ENCODE measurements at regions of chr1 and their contacts with region 1.

Region 1: DNA sequence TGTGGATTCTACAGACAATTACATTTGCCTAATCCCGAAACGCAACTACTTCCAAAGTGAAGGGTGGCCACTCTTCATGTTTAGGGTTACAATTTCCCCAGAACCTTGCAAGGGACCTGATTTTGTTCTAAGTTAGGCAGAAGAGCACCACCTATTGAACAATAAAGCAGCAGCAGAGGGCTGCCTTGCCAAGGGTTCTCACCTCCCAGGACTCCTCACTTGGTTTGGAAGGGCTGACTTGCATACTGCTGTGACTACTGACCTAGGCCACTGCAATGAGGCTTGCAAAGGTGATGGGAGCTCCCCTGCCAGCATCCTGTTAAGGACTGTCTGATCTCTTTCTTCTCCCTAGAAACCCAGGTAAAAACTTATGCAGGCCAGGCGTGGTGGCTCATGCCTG is 14.2 kb downstream of the MTOR start:
- DNase-seq: no peak
- ATAC-seq: no peak
- H3K4me3 ChIP-seq: no peak overlapping the region
- H3K27ac ChIP-seq: no peak overlapping the region
- H3K4me1 ChIP-seq: no peaks in the 10 kb centered on the region
- H3K27me3 ChIP-seq: no peaks in the 10 kb centered on the region
- CTCF ChIP-seq: no peak

Region 2: GRCh38 chr1:11384170-11384554 is 136.0 kb after region 1 on chr1:
- intact Hi-C with region 1: no loop called
- DNase-seq: no peak
- ATAC-seq: no peak
- H3K4me3 ChIP-seq: no peak overlapping the region
- H3K27ac ChIP-seq: no peak overlapping the region
- H3K4me1 ChIP-seq: no peaks in the 10 kb centered on the region
- H3K27me3 ChIP-seq: peaks cover 0 to 69% of the 10 kb centered on the region in 2 donors
- CTCF ChIP-seq: no peak

Region 3: DNA sequence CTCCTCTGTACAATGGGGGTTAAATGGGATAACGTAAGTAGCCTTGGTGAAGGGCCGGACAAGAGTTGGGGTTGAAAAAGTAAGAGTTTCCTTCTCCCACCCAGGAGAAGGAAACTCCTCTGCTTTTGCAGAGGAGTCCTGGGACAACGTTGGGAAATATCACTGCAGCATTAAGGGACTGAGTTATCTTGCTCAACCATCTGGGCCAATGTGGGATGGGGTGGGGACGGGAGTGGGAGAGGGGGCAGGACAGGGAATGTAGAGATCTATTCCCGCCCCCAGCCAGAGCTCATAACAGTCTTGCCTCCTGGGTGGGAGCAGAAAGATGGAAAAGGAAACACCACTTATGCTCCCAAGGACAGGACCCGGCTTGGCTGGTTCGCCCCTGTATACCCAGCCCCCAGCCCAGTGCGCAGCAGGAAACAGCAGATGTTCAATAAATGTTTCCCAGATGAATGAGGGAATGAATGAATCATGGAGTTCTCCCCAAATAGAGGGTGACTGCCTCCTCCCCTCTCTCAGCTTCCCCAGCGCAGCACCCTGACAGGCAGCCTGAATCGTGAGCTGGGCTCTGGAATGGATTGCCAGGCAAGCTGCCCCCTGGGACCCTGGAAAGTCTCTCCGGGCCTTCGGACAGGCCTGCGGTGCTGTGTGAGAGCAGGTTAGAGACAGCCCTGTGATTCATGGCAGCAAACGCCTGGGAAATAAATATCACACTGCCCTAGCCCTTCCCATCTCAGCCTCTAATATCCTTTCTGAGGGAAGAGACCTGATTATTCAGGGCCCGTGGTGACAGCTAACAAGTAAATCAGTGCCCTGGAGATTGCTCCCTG is 381.2 kb after region 1 on chr1:
- intact Hi-C with region 1: loop called in 1 of 2 experiments (anchors 10 kb)
- DNase-seq: no peak
- ATAC-seq: no peak
- H3K4me3 ChIP-seq: no peak overlapping the region
- H3K27ac ChIP-seq: no peak overlapping the region
- H3K4me1 ChIP-seq: no peaks in the 10 kb centered on the region
- H3K27me3 ChIP-seq: peaks cover 0 to 57% of the 10 kb centered on the region in 2 donors
- CTCF ChIP-seq: no peak

Measured in left lung (tissue), 14 donors.